Left cardiac atrium (tissue), 4 donors: ENCODE measurements at regions of chr11 and their contacts with region 1.

Region 1: DNA sequence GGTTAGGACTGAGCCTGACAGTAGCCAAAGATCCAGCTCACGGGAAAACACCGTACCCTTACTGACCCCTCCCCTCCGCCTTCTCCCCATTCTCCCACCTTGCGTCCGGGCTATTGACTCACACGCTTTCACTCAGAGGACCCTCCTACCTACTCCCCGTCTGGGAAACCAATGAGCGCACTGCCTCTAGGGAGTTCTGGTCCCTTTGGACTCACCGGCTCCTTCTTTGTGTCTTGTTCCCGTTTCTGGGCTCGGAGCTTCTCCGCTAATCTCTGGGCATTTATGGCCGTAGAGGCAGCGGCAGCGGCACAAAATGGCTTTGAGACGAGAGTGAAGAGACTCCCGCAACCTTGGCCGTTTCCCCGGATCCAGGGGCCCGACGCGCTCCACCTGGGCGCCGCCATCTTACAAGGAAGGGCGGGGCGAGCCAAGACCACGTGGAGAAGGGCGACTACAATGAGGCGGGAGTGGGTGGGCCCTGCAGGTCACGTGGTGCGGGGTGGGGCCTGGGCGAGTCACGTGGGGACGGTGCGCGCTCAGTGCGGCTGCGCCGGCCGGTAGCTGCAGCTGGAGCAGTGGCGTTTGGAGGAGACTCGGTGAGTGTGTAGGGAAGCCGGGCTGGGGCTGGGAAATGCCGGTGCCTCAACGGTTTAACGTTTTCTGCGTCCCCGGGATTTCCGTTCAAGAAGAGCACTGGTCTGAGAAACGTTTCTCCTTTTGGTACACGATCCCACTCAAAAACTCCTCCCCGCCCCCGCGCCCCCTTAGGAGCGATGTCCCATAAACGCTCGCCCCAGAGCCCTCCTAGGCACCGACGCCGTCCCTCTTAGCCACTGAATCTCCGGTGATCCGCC is at the starts of genes FAM118B and RPUSD4:
- DNase-seq: peak; percentile 98
- ATAC-seq: peak; percentile 99 to 100
- total RNA-seq, gene FAM118B: 14.8 to 19.1 TPM
- total RNA-seq, gene RPUSD4: 18.9 to 19.2 TPM

Region 2: GRCh38 chr11:126083829-126084607 is 127.4 kb before region 1 on chr11:
- intact Hi-C with region 1: no loop called
- DNase-seq: no peak
- ATAC-seq: peak in 1 of 2 donors; percentile 46

Region 3: GRCh38 chr11:126172596-126173038 is 38.8 kb before region 1 on chr11:
- intact Hi-C with region 1: no loop called
- DNase-seq: no peak
- ATAC-seq: peak in 1 of 2 donors; percentile 54

Region 4: GRCh38 chr11:126268708-126269579 is 57.5 kb after region 1 on chr11 and contains the starts of genes FOXRED1 and SRPRA:
- intact Hi-C with region 1: loop called in 1 of 2 experiments (anchors 10 kb)
- DNase-seq: peak; percentile 100
- ATAC-seq: peak; percentile 99 to 100
- total RNA-seq, gene FOXRED1: 21.0 to 25.3 TPM
- total RNA-seq, gene SRPRA: 65.1 to 95.7 TPM